Naive thymus-derived CD4-positive, alpha-beta T cell (primary cell): ENCODE measurements at regions of chr6 and their contacts with region 1.

Region 1: DNA sequence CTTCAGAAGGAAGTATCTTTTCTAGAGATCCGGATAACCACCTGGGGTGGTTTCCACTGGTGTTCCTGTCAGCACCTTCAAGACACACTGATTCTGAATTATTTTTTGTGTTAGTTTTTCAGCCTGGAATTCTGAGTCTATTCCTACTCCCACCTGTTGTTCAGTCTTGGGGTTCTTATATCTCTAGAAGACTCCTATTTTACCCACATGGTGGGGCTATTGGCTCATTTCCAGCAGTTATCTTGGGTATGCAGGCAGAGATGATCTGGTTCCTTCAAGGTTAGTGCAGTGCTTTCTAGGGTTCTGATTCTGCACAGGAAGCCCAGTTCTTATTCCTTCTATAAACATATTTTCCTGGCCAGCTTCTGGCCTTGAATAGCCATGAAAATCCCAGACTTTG is 175.6 kb upstream of the PDE7B start:
- DNase-seq: peak in 7 of 9 donors; percentile 51 to 71 (median 63)
- ATAC-seq: peak; percentile 79
- H3K4me3 ChIP-seq: no peak overlapping the region
- H3K4me3 Mint-ChIP-seq: no peak overlapping the region
- H3K27ac ChIP-seq: no peak overlapping the region
- H3K27ac Mint-ChIP-seq: peak overlapping the region in 2 of 9 donors; percentile 53 to 63
- H3K4me1 ChIP-seq: no peaks in the 10 kb centered on the region
- H3K4me1 Mint-ChIP-seq: peaks cover 0 to 39% (median 0%) of the 10 kb centered on the region in 7 donors
- H3K27me3 ChIP-seq: peaks cover 0 to 4% of the 10 kb centered on the region in 2 donors
- H3K27me3 Mint-ChIP-seq: no peaks in the 10 kb centered on the region

Region 2: GRCh38 chr6:135506270-135506997 is 169.4 kb before region 1 on chr6:
- CTCF ChIA-PET with region 1: no interaction called
- POLR2A ChIA-PET with region 1: no interaction called
- intact Hi-C with region 1: loop called (anchors 1 kb)
- DNase-seq: peak in 7 of 9 donors; percentile 7 to 53 (median 33)
- ATAC-seq: peak; percentile 90
- H3K4me3 ChIP-seq: no peak overlapping the region
- H3K4me3 Mint-ChIP-seq: no peak overlapping the region
- H3K27ac ChIP-seq: no peak overlapping the region
- H3K27ac Mint-ChIP-seq: peak overlapping the region in 1 of 9 donors; percentile 33
- H3K4me1 ChIP-seq: peaks cover 0 to 6% of the 10 kb centered on the region in 2 donors
- H3K4me1 Mint-ChIP-seq: peaks cover 0 to 14% (median 0%) of the 10 kb centered on the region in 7 donors
- H3K27me3 ChIP-seq: no peaks in the 10 kb centered on the region
- H3K27me3 Mint-ChIP-seq: peaks cover 0 to 2% (median 0%) of the 10 kb centered on the region in 5 donors

Region 3: GRCh38 chr6:136031982-136032381 is 356.1 kb after region 1 on chr6:
- CTCF ChIA-PET with region 1: no interaction called
- POLR2A ChIA-PET with region 1: no interaction called
- intact Hi-C with region 1: loop called in 1 of 2 experiments (anchors 2 kb)
- DNase-seq: peak in 3 of 9 donors; percentile 6 to 7 (median 7)
- ATAC-seq: no peak
- H3K4me3 ChIP-seq: no peak overlapping the region
- H3K4me3 Mint-ChIP-seq: no peak overlapping the region
- H3K27ac ChIP-seq: no peak overlapping the region
- H3K27ac Mint-ChIP-seq: no peak overlapping the region
- H3K4me1 ChIP-seq: no peaks in the 10 kb centered on the region
- H3K4me1 Mint-ChIP-seq: peaks cover 0 to 7% (median under 1%) of the 10 kb centered on the region in 7 donors
- H3K27me3 ChIP-seq: no peaks in the 10 kb centered on the region
- H3K27me3 Mint-ChIP-seq: peaks cover 0 to 3% (median 0%) of the 10 kb centered on the region in 5 donors

Region 4: DNA sequence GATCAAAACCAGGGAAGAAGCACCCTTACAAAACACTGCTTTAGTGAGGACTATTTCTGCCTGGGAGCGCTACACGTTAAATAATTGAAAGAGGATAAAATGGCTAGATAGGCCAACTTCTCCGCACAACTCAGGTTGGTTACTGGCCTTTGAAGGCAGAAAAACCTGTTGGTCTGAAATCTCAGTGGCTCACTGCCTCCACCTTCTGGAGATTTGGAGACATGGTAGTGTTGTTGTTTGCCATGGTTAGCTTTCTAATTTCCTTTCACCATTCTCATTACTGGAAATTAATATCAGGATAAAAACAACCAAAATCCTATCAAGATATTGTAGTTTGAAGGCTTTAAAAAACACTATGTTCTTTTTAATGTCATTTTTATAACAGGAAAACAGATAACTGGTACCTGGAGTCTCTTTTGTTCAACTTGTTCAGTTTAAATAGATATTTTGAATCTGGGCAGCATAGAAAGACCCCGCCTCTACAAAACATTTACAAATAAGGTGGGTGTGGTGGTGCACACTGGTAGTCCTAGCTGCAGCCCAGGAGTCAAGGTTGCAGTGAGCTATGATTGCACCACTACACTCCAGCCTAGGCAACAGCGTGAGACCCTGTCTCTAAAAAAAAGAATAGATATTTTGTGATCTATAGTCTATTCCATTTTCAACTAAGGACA is 641.3 kb after region 1 on chr6:
- CTCF ChIA-PET with region 1: interaction called, 3 read pairs
- POLR2A ChIA-PET with region 1: no interaction called
- intact Hi-C with region 1: loop called in 1 of 2 experiments (anchors 1 kb)
- DNase-seq: peak; percentile 25 to 77 (median 66)
- ATAC-seq: peak; percentile 91
- H3K4me3 ChIP-seq: no peak overlapping the region
- H3K4me3 Mint-ChIP-seq: no peak overlapping the region
- H3K27ac ChIP-seq: no peak overlapping the region
- H3K27ac Mint-ChIP-seq: peak overlapping the region in 1 of 9 donors; percentile 19
- H3K4me1 ChIP-seq: no peaks in the 10 kb centered on the region
- H3K4me1 Mint-ChIP-seq: peaks cover 0 to 5% (median 0%) of the 10 kb centered on the region in 7 donors
- H3K27me3 ChIP-seq: no peaks in the 10 kb centered on the region
- H3K27me3 Mint-ChIP-seq: peaks cover 0 to 19% (median 0%) of the 10 kb centered on the region in 5 donors